Naive thymus-derived CD4-positive, alpha-beta T cell (primary cell): ENCODE measurements at regions of chr2 and their contacts with region 1.

Region 1: DNA sequence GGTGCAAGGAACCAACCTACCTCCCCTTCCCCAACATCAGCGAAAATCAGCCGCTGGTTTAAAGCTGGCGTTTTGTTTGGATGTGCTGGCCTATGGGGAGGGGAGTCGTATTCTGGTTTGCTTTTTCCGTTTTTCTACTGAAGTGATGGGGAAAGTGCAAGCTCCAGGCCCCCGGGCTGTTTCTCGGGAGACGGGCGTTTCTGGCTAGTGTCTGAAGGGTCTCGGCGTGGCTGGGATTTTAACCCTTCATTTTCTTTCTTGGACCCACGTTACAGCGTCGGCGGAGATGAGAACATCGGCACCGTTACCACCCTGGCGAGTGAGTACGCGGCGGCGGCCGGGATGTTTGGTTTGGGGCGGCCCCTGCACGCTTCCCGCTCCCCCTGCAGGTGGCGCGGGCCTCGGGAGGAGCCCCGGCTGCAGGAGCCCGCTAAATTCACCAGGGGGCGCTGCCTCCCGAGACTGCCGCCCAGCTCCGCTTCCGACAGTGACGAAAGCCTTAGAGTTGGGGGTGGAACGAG is 70.7 kb downstream of the PLB1 start:
- DNase-seq: peak; percentile 81 to 96 (median 90)
- ATAC-seq: peak; percentile 100
- H3K4me3 ChIP-seq: peak overlapping the region; percentile 74
- H3K4me3 Mint-ChIP-seq: peak overlapping the region; percentile 84 to 95 (median 92)
- H3K27ac ChIP-seq: peak overlapping the region; percentile 84
- H3K27ac Mint-ChIP-seq: peak overlapping the region; percentile 59 to 96 (median 92)
- H3K4me1 ChIP-seq: peaks cover 6 to 12% of the 10 kb centered on the region in 2 donors
- H3K4me1 Mint-ChIP-seq: peaks cover 6 to 24% (median 16%) of the 10 kb centered on the region in 7 donors
- H3K27me3 ChIP-seq: peaks cover 0 to 3% of the 10 kb centered on the region in 2 donors
- H3K27me3 Mint-ChIP-seq: peaks cover 0 to 6% (median 0%) of the 10 kb centered on the region in 5 donors

Region 2: DNA sequence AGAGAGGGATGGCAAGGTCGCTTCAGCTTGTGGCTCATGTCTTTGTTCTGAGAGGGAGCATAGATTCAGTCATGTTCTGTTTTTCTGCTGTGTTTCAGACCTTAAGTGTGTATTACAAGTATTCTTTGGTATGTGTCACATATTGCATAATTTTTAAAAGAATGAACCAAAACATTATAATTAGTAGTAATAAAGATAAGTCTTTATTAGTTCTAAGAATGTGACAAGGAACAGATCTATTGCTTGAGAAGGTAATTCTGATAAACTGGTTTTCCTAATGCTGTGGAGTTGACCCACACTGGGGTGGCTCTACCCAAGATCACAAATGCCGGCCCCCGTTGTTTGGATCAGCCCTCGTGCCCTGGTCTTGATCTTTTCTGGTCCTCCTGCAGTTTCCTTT is 298.2 kb before region 1 on chr2:
- CTCF ChIA-PET with region 1: no interaction called
- POLR2A ChIA-PET with region 1: no interaction called
- intact Hi-C with region 1: no loop called
- DNase-seq: no peak
- ATAC-seq: no peak
- H3K4me3 ChIP-seq: no peak overlapping the region
- H3K4me3 Mint-ChIP-seq: no peak overlapping the region
- H3K27ac ChIP-seq: no peak overlapping the region
- H3K27ac Mint-ChIP-seq: no peak overlapping the region
- H3K4me1 ChIP-seq: peaks cover 0 to 9% of the 10 kb centered on the region in 2 donors
- H3K4me1 Mint-ChIP-seq: peaks cover 0 to 33% (median 6%) of the 10 kb centered on the region in 7 donors
- H3K27me3 ChIP-seq: no peaks in the 10 kb centered on the region
- H3K27me3 Mint-ChIP-seq: no peaks in the 10 kb centered on the region

Region 3: GRCh38 chr2:28475088-28475605 is 91.4 kb before region 1 on chr2:
- CTCF ChIA-PET with region 1: no interaction called
- POLR2A ChIA-PET with region 1: no interaction called
- intact Hi-C with region 1: no loop called
- DNase-seq: no peak
- ATAC-seq: no peak
- H3K4me3 ChIP-seq: no peak overlapping the region
- H3K4me3 Mint-ChIP-seq: no peak overlapping the region
- H3K27ac ChIP-seq: no peak overlapping the region
- H3K27ac Mint-ChIP-seq: peak overlapping the region in 1 of 9 donors; percentile 56
- H3K4me1 ChIP-seq: peaks cover 0 to 7% of the 10 kb centered on the region in 2 donors
- H3K4me1 Mint-ChIP-seq: peaks cover 8 to 17% (median 16%) of the 10 kb centered on the region in 7 donors
- H3K27me3 ChIP-seq: no peaks in the 10 kb centered on the region
- H3K27me3 Mint-ChIP-seq: peaks cover 0 to 7% (median 0%) of the 10 kb centered on the region in 5 donors

Region 4: GRCh38 chr2:28527196-28527595 is 39.4 kb before region 1 on chr2:
- CTCF ChIA-PET with region 1: no interaction called
- POLR2A ChIA-PET with region 1: no interaction called
- intact Hi-C with region 1: no loop called
- DNase-seq: no peak
- ATAC-seq: no peak
- H3K4me3 ChIP-seq: no peak overlapping the region
- H3K4me3 Mint-ChIP-seq: no peak overlapping the region
- H3K27ac ChIP-seq: no peak overlapping the region
- H3K27ac Mint-ChIP-seq: no peak overlapping the region
- H3K4me1 ChIP-seq: no peaks in the 10 kb centered on the region
- H3K4me1 Mint-ChIP-seq: peaks cover 0 to 2% (median 0%) of the 10 kb centered on the region in 7 donors
- H3K27me3 ChIP-seq: no peaks in the 10 kb centered on the region
- H3K27me3 Mint-ChIP-seq: peaks cover 8 to 42% (median 19%) of the 10 kb centered on the region in 5 donors

Region 5: GRCh38 chr2:28621172-28622100 is 54.9 kb after region 1 on chr2:
- CTCF ChIA-PET with region 1: interaction called, 3 read pairs
- POLR2A ChIA-PET with region 1: no interaction called
- intact Hi-C with region 1: loop called in 1 of 2 experiments (anchors 1 kb)
- DNase-seq: peak; percentile 44 to 96 (median 93)
- ATAC-seq: peak; percentile 94
- H3K4me3 ChIP-seq: peak overlapping the region; percentile 40
- H3K4me3 Mint-ChIP-seq: peak overlapping the region in 9 of 10 donors; percentile 71 to 86 (median 80)
- H3K27ac ChIP-seq: peak overlapping the region; percentile 95
- H3K27ac Mint-ChIP-seq: peak overlapping the region in 5 of 9 donors; percentile 93 to 100 (median 100)
- H3K4me1 ChIP-seq: peaks cover 43 to 86% of the 10 kb centered on the region in 2 donors
- H3K4me1 Mint-ChIP-seq: peaks cover 0 to 96% (median 59%) of the 10 kb centered on the region in 7 donors
- H3K27me3 ChIP-seq: no peaks in the 10 kb centered on the region
- H3K27me3 Mint-ChIP-seq: no peaks in the 10 kb centered on the region

Region 6: GRCh38 chr2:28821295-28821958 is 254.8 kb after region 1 on chr2:
- CTCF ChIA-PET with region 1: interaction called, 6 read pairs
- POLR2A ChIA-PET with region 1: no interaction called
- intact Hi-C with region 1: loop called in 1 of 2 experiments (anchors 1 kb)
- DNase-seq: peak in 8 of 9 donors; percentile 39 to 74 (median 60)
- ATAC-seq: peak; percentile 93
- H3K4me3 ChIP-seq: no peak overlapping the region
- H3K4me3 Mint-ChIP-seq: no peak overlapping the region
- H3K27ac ChIP-seq: no peak overlapping the region
- H3K27ac Mint-ChIP-seq: peak overlapping the region in 1 of 9 donors; percentile 7
- H3K4me1 ChIP-seq: no peaks in the 10 kb centered on the region
- H3K4me1 Mint-ChIP-seq: peaks cover 0 to 5% (median 2%) of the 10 kb centered on the region in 7 donors
- H3K27me3 ChIP-seq: no peaks in the 10 kb centered on the region
- H3K27me3 Mint-ChIP-seq: peaks cover 0 to 3% (median 0%) of the 10 kb centered on the region in 5 donors

Region 7: DNA sequence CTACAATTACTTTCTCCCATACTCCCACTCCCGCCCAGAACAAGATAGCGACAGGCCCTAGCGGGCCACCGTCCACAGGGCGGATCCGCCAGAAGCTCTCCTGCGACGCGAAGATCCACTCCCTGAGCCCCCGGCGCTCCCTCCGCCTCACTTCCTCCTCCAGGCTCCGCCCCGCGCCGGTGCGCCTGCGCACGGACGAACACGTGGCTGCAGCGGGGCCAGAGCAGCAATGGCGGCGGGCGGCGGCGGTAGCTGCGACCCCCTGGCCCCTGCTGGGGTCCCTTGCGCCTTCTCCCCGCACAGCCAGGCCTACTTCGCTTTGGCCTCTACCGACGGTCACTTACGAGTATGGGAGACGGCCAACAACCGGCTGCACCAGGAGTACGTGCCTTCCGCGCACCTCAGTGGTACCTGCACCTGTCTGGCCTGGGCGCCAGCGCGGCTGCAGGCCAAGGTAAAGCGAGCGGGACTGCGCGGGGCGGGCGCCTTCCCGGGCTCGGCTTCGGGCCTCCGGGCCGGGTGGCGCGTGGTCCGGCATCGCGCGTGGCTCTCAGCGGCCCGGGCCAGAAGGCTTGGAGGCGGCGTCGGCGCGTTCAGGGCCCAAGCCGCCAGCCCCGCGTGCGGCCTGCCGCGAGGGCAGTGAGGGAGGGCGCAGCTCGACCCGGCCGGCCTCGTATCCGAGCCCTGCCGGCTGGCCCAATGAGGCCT is 328.0 kb after region 1 on chr2 and contains the start of gene WDR43:
- CTCF ChIA-PET with region 1: interaction called, 3 read pairs
- POLR2A ChIA-PET with region 1: no interaction called
- intact Hi-C with region 1: loop called (anchors 1 to 10 kb)
- DNase-seq: peak; percentile 97 to 100 (median 99)
- ATAC-seq: peak; percentile 100
- H3K4me3 ChIP-seq: peak within 1 kb of the TSS; percentile 88
- H3K4me3 Mint-ChIP-seq: peak within 1 kb of the TSS; percentile 91 to 99 (median 98)
- H3K27ac ChIP-seq: peak within 1 kb of the TSS; percentile 78
- H3K27ac Mint-ChIP-seq: peak within 1 kb of the TSS; percentile 91 to 99 (median 94)
- H3K4me1 ChIP-seq: peaks cover 28% of the 10 kb centered on the region in 2 donors
- H3K4me1 Mint-ChIP-seq: peaks cover 31 to 49% (median 43%) of the 10 kb centered on the region in 7 donors
- H3K27me3 ChIP-seq: no peaks in the 10 kb centered on the region
- H3K27me3 Mint-ChIP-seq: peaks cover 0 to 2% (median 0%) of the 10 kb centered on the region in 5 donors
- total RNA-seq, gene WDR43: 49.6 to 75.0 (median 63.9) TPM

Region 8: GRCh38 chr2:29196792-29197788 is 630.5 kb after region 1 on chr2:
- CTCF ChIA-PET with region 1: no interaction called
- POLR2A ChIA-PET with region 1: no interaction called
- intact Hi-C with region 1: loop called in 1 of 2 experiments (anchors 5 kb)
- DNase-seq: peak; percentile 46 to 86 (median 73)
- ATAC-seq: peak; percentile 96
- H3K4me3 ChIP-seq: no peak overlapping the region
- H3K4me3 Mint-ChIP-seq: no peak overlapping the region
- H3K27ac ChIP-seq: no peak overlapping the region
- H3K27ac Mint-ChIP-seq: peak overlapping the region in 1 of 9 donors; percentile 67
- H3K4me1 ChIP-seq: no peaks in the 10 kb centered on the region
- H3K4me1 Mint-ChIP-seq: peaks cover 0 to 9% (median 5%) of the 10 kb centered on the region in 7 donors
- H3K27me3 ChIP-seq: no peaks in the 10 kb centered on the region
- H3K27me3 Mint-ChIP-seq: no peaks in the 10 kb centered on the region